Gastrocnemius medialis (tissue), 4 donors: ENCODE measurements at regions of chr22 and their contacts with region 1.

Region 1: DNA sequence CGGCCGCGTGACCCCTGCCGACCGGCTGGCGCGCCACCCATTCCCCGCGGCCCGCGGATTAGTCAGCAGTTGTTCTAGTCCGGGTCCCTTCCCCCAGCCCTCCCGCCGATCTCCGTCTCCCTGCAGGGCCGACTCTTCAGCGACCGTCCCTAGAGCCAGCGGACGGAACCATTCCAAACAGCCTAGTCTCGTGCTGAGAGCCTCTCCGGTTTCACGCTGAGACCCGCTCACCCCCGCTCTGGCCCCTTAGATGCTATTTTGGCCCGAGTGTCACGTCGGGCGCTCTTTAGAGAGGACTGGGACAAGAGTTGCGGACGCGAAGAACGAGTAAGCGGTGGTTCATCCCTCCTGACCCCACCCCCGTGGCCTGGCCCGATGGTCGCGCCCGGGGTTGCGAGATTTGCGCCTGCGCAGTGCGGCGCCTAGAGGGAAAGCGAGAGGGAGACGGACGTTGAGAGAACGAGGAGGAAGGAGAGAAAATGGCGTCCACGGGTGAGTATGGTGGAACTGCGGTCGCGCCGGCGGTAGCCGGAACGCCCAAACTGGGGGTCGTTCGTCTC is at the starts of genes EWSR1 and RHBDD3:
- DNase-seq: peak; percentile 95 to 97
- ATAC-seq: peak; percentile 92 to 93
- H3K4me3 ChIP-seq: peak within 1 kb of the TSS; percentile 83 to 97 (median 94)
- H3K27ac ChIP-seq: peak within 1 kb of the TSS; percentile 97 to 100 (median 98)
- H3K4me1 ChIP-seq: peaks cover 48 to 57% of the 10 kb centered on the region in 2 donors
- H3K27me3 ChIP-seq: no peaks in the 10 kb centered on the region
- CTCF ChIP-seq: peak in 2 of 5 experiments; percentile 28 to 29
- POLR2A ChIP-seq: peak; percentile 85 to 89
- total RNA-seq, gene EWSR1: 192 to 269 (median 202) TPM
- total RNA-seq, gene RHBDD3: 19.8 to 38.0 (median 28.6) TPM

Region 2: DNA sequence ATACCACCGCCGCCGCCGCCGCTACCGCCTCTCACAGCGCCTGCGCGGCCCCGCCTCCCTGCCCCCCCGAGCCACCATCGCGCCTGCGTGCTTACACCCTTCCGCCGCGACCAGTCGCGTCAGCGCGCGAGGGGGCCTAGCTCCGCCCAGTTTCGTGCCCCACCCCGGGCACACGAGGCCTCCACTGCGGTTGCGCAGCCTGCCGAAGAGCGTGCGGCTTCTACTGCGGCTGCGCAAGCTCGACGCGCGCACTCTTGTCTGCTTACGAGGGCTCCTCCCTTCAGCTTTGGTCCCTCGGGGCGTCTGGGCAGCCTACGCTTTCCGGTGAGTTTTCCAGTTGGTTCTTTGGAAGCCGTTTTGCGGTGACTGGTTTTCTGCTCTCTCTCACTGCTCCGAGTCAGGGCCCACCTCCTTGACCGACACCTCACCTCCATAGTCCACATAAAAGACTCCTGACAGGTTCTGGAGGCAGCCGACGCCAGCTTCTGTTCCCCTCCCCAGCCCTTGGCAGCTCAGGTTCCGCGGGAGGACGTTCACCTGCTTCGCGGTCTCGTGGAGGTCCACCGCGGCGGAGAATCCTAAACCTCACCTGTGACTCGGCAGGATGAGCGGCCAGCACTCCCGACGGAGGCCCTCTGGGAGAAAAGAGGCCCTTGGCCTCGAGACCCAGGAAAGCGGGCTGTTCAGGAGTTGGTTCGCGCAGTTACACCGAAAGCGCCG is 1348.6 kb before region 1 on chr22 and contains the start of gene PITPNB:
- in situ Hi-C with region 1: no loop called
- intact Hi-C with region 1: loop called (anchors 5 kb)
- DNase-seq: peak; percentile 95 to 96
- ATAC-seq: peak; percentile 94 to 96
- H3K4me3 ChIP-seq: peak within 1 kb of the TSS; percentile 86 to 98 (median 90)
- H3K27ac ChIP-seq: peak within 1 kb of the TSS; percentile 95 to 100 (median 98)
- H3K4me1 ChIP-seq: peaks cover 23 to 36% of the 10 kb centered on the region in 2 donors
- H3K27me3 ChIP-seq: no peaks in the 10 kb centered on the region
- CTCF ChIP-seq: no peak
- POLR2A ChIP-seq: peak; percentile 95 to 96
- total RNA-seq, gene PITPNB: 12.1 to 18.7 (median 16.1) TPM

Region 3: DNA sequence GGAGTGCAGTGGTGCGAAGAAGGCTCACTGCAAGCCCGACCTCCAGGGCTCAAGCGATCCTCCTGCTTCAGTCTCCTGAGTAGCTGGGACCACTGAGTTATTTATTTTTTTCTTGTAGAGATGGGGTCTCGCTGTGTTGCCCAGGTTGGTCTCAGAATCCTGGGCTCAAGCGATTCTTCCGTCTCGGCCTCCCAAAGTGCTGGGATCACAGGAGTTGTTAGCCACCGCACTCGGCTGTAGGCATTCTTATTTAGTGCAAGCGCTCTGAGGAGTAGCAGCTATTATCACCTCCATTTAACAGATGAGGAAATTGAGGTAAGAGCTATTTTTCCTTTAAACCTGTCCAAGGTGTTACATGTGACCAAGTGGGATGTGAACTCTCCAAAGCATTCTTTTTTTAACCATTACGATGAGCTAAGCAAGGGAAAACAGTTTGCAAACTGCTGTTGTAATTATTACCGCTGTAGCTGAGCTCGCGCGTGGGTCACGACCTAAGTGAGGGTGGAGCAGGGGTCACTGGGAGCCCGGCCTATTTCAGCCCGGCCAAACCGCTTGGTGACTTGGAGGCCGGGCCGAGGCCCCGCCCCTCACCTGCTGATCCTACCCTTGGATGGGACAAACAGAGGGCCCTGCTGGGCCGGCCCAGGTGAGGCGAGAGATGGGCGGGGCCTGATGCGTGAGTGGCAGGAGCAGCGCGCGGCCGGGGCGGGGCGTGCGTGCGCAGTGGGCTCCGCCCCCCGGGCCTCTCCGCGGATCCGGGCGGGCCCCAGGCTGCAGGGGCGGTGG is 195.6 kb before region 1 on chr22:
- in situ Hi-C with region 1: no loop called
- intact Hi-C with region 1: loop called (anchors 5 kb)
- DNase-seq: peak; percentile 74 to 87
- ATAC-seq: peak; percentile 83 to 88
- H3K4me3 ChIP-seq: peak overlapping the region; percentile 48 to 73 (median 68)
- H3K27ac ChIP-seq: peak overlapping the region; percentile 16 to 60 (median 38)
- H3K4me1 ChIP-seq: peaks cover 21 to 37% of the 10 kb centered on the region in 2 donors
- H3K27me3 ChIP-seq: no peaks in the 10 kb centered on the region
- CTCF ChIP-seq: no peak
- POLR2A ChIP-seq: no peak

Region 4: GRCh38 chr22:29603358-29604075 is 335.6 kb after region 1 on chr22 and contains the start of gene NF2:
- in situ Hi-C with region 1: no loop called
- intact Hi-C with region 1: loop called (anchors 2 kb)
- DNase-seq: peak; percentile 98 to 99
- ATAC-seq: peak; percentile 99 to 100
- H3K4me3 ChIP-seq: peak within 1 kb of the TSS; percentile 94 to 99 (median 96)
- H3K27ac ChIP-seq: peak within 1 kb of the TSS; percentile 97 to 99 (median 98)
- H3K4me1 ChIP-seq: peaks cover 11 to 16% of the 10 kb centered on the region in 2 donors
- H3K27me3 ChIP-seq: no peaks in the 10 kb centered on the region
- CTCF ChIP-seq: peak in 1 of 5 experiments; percentile 8
- POLR2A ChIP-seq: peak; percentile 60 to 71
- total RNA-seq, gene NF2: 34.7 to 66.3 (median 48.2) TPM

Region 5: DNA sequence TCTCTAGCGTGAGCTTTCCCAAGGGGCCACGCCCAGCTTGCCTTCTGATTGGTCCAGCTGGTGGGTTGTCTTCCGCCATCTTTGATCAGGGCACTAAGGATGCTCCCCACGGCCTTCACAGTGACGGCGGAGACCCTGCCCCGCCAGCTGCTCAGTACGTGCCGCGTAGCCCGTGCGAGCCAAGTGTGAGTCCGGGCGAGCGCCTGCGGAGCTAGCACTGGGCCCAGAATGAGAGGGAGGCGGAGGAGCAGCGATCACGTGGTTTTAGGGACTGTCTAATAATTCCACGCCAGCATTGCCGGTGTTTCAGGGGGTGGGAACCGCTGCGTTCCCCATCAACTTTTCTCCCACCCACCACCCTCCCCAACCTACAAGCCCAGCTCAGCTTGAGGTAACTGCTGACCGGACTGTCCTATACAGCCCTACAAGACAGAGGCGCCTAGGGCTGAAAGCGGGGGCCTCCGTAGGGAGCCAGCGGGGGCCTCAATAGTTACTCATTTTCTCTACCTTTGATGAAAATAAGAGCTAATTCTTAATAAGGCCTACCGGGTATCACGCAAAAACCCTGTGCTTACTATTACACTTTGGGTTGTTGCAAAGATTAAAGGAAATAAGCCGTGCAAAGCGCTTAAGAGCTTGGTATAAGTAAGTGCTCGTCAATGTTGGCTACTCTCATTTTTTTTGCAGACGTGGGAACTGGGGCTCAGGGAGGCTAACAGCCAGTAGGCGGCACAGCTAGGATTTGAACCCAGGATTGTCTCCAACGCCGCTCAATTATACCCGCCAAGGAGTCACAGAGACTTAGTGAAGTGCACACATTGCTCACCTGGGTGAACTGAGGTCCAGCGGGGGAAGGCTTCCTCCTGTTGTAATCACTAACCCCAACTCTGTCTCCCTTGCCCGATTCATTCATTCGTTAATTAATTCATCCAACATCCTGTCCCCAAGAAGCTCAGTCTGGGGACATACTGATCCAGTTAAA is 1156.3 kb after region 1 on chr22:
- in situ Hi-C with region 1: no loop called
- intact Hi-C with region 1: loop called (anchors 5 kb)
- DNase-seq: peak; percentile 99
- ATAC-seq: peak; percentile 80 to 89
- H3K4me3 ChIP-seq: peak overlapping the region; percentile 60 to 96 (median 78)
- H3K27ac ChIP-seq: peak overlapping the region; percentile 92 to 100 (median 99)
- H3K4me1 ChIP-seq: peaks cover 31 to 32% of the 10 kb centered on the region in 2 donors
- H3K27me3 ChIP-seq: no peaks in the 10 kb centered on the region
- CTCF ChIP-seq: no peak
- POLR2A ChIP-seq: peak in 1 of 2 donors; percentile 73